Mammary epithelial cell (primary cell): ENCODE measurements at regions of chr11 and their contacts with region 1.

Region 1: GRCh38 chr11:15208378-15209222 is 93.9 kb downstream of the INSC start:
- DNase-seq: peak; percentile 27
- H3K4me3 ChIP-seq: no peak overlapping the region
- H3K27ac ChIP-seq: no peak overlapping the region
- H3K4me1 ChIP-seq: no peaks in the 10 kb centered on the region
- H3K27me3 ChIP-seq: no peaks in the 10 kb centered on the region
- CTCF ChIP-seq: peak; percentile 80 to 94

Region 2: DNA sequence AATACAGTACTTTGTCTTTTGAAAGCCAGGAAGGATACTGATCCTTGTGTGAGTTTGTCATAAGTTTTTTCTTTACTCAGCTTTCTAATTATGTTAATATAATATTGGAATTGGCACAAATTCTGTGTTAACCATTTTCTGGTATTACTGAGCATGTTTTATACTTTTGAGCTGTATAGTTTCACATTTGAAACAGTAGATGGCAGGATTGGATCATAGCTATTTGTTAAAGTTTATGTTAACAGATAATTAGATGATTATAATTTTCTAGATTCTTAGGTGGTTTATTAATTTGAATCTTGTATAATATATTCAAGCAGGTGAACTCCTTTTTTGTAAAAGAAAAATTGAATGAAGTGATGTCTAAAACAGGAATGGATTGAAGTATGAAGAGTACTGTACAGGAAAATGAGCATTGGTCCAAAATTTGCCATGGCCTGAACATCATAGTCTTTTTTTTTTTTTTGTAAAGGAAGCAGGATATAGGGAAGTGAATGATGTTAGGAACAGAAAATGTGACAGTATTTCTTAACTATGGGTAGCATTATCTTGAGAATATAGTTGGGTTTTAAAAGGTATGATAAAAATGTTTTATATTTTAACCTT is 418.6 kb before region 1 on chr11:
- CTCF ChIA-PET with region 1: no interaction called
- dilution Hi-C with region 1: no loop called
- in situ Hi-C with region 1: no loop called
- intact Hi-C with region 1: loop called (anchors 5 kb)
- DNase-seq: no peak
- H3K4me3 ChIP-seq: no peak overlapping the region
- H3K27ac ChIP-seq: no peak overlapping the region
- H3K4me1 ChIP-seq: no peaks in the 10 kb centered on the region
- H3K27me3 ChIP-seq: peaks cover 4% of the 10 kb centered on the region
- CTCF ChIP-seq: peak; percentile 35 to 63

Region 3: DNA sequence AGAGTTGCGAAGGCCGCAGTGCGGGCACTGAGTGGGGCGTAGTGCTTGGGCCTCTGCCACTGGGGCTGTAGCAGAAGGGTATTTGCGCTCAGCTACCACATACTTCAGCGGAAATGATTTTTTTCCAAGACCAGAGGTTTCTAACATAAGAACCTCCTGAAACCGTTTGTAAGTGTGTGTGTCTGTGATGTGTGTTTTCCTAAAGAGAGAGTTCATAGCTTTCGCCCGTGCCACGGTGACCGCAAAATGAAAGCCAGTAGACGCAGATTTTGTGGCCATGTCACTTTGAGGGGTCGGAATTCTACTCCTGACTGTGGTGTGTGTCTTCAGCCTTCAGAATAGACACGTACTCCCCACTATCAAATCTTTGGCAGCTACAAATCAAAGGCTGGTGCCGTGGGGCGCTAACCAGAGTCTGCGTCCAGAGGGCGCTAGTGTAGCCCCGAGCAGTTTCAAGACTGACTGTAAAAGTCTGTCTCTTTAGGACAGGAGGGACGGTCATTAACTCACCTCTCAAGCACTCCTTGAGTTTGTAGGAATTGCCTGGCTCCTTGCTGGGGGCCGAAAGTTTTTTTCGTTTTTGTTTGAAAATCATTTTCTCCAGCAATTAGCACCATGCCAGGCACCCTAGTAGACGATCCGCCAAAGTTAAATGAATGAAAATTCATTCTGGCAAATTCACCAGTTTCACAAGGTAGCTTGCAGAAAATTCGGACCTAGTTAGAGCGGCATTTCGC is 233.9 kb before region 1 on chr11:
- CTCF ChIA-PET with region 1: no interaction called
- dilution Hi-C with region 1: no loop called
- in situ Hi-C with region 1: no loop called
- intact Hi-C with region 1: loop called (anchors 2 kb)
- DNase-seq: peak; percentile 33
- H3K4me3 ChIP-seq: peak overlapping the region in 2 of 3 experiments; percentile 2 to 5
- H3K27ac ChIP-seq: no peak overlapping the region
- H3K4me1 ChIP-seq: peaks cover 18% of the 10 kb centered on the region
- H3K27me3 ChIP-seq: peaks cover 48% of the 10 kb centered on the region
- CTCF ChIP-seq: peak; percentile 84 to 90

Region 4: DNA sequence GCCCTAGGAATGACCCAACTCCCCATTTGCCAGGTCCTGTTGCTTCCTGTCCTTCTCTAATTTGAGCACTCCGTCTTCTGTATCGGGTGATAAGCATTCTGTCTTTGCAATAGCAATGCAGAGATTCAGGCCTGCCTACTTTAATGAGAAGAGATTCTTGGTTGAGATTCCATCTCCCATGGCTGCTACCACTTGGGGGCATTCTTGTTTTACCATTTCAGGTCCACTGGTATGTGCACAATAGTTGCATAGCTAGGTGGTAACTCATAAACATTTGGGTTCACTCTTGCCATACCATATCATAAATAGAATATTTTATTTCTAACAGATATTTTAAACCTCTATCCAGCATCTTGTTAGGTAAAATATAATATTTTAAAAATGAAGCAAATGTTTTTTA is 169.6 kb before region 1 on chr11:
- CTCF ChIA-PET with region 1: no interaction called
- dilution Hi-C with region 1: no loop called
- in situ Hi-C with region 1: no loop called
- intact Hi-C with region 1: loop called (anchors 1 kb)
- DNase-seq: peak; percentile 24
- H3K4me3 ChIP-seq: no peak overlapping the region
- H3K27ac ChIP-seq: no peak overlapping the region
- H3K4me1 ChIP-seq: no peaks in the 10 kb centered on the region
- H3K27me3 ChIP-seq: no peaks in the 10 kb centered on the region
- CTCF ChIP-seq: peak; percentile 38 to 63

Region 5: DNA sequence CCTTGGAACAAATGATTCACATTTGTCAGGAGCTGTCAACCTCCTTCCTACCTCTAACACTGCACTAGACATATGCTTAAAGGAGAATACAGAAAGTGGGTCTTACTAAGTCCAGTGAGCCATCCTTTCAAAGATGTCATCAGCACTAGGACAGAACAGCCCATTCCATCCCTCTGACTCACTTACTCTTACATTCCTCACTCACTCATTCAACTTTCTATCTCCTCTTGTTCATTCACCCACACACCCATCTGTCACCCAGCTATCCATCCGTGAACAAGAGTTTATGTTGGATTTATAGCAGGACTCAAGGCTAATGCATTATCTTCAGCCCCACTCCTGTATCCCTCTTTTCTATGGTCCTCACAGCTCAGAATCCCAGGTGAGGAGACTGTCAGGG is 84.8 kb before region 1 on chr11:
- CTCF ChIA-PET with region 1: no interaction called
- dilution Hi-C with region 1: no loop called
- in situ Hi-C with region 1: no loop called
- intact Hi-C with region 1: no loop called
- DNase-seq: peak; percentile 76
- H3K4me3 ChIP-seq: no peak overlapping the region
- H3K27ac ChIP-seq: no peak overlapping the region
- H3K4me1 ChIP-seq: peaks cover 39% of the 10 kb centered on the region
- H3K27me3 ChIP-seq: no peaks in the 10 kb centered on the region
- CTCF ChIP-seq: no peak

Region 6: DNA sequence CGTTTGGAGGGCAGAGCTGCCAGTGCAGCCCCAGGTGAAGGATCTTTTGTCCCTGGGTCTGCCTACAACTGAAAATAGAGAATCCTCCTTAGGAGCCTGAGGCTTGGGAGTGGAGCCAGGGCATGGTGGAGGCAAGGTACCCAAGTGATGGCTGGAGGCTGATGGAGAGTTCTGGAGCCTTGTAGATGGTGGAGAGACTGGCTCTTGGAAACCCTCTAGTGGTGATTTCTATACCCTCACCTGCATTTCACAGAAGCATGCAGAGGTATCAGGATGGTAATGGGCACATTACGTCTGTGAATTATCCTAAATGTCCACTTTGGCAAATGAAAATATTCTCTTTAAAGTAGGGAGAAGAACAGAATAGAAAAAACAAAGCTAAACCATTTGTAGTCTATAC is 49.5 kb before region 1 on chr11:
- CTCF ChIA-PET with region 1: no interaction called
- dilution Hi-C with region 1: no loop called
- in situ Hi-C with region 1: no loop called
- intact Hi-C with region 1: loop called (anchors 1 kb)
- DNase-seq: peak; percentile 39
- H3K4me3 ChIP-seq: no peak overlapping the region
- H3K27ac ChIP-seq: no peak overlapping the region
- H3K4me1 ChIP-seq: peaks cover 19% of the 10 kb centered on the region
- H3K27me3 ChIP-seq: no peaks in the 10 kb centered on the region
- CTCF ChIP-seq: peak; percentile 76 to 81

Region 7: GRCh38 chr11:15189641-15190365 is 18.8 kb before region 1 on chr11:
- CTCF ChIA-PET with region 1: no interaction called
- dilution Hi-C with region 1: no loop called
- in situ Hi-C with region 1: no loop called
- intact Hi-C with region 1: no loop called
- DNase-seq: no peak
- H3K4me3 ChIP-seq: no peak overlapping the region
- H3K27ac ChIP-seq: no peak overlapping the region
- H3K4me1 ChIP-seq: no peaks in the 10 kb centered on the region
- H3K27me3 ChIP-seq: no peaks in the 10 kb centered on the region
- CTCF ChIP-seq: no peak